HEK293T (cell line): ENCODE measurements at regions of chr10 and their contacts with region 1.

Region 1: GRCh38 chr10:22436884-22437619 is 91.8 kb downstream of the SPAG6 start:
- DNase-seq: peak; percentile 74

Region 2: GRCh38 chr10:22316285-22317120 is 120.5 kb before region 1 on chr10 and contains the start of gene COMMD3:
- CTCF ChIA-PET with region 1: no interaction called
- POLR2A ChIA-PET with region 1: interaction called, 19 read pairs
- DNase-seq: peak; percentile 67

Region 3: GRCh38 chr10:22340362-22341189 is 96.5 kb before region 1 on chr10:
- CTCF ChIA-PET with region 1: no interaction called
- POLR2A ChIA-PET with region 1: interaction called, 16 read pairs
- DNase-seq: peak; percentile 71

Region 4: DNA sequence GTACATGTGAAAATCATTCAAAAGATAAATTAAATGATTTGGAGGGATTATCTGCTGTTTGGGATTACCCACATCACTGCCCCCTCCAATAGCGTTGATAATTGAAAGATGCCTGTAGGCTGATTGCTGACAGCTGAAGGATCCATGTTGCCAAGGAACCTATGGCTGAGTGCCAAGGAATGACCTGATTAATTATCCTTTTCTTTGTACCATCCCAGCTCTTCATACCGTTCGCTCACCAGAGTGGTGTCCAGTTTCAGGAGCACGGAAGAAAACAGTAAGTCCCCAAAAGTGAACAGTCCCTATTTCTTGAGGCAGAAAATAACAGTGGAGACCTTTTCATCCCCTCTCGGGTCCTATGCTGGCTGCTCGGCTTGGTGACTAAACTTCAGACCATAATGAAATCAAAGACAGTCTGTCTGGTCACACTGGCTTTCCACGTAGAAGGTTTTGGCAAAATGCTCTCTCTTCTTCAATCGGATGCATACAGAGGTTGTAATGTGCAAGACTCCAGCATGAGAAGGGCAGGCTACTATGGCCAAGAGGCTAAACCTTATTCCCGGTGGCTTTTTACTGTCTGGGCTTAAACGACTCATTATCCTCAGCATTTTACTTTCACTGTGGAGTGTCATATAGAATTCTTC is 17.0 kb after region 1 on chr10:
- CTCF ChIA-PET with region 1: no interaction called
- POLR2A ChIA-PET with region 1: interaction called, 44 read pairs
- DNase-seq: no peak

Region 5: DNA sequence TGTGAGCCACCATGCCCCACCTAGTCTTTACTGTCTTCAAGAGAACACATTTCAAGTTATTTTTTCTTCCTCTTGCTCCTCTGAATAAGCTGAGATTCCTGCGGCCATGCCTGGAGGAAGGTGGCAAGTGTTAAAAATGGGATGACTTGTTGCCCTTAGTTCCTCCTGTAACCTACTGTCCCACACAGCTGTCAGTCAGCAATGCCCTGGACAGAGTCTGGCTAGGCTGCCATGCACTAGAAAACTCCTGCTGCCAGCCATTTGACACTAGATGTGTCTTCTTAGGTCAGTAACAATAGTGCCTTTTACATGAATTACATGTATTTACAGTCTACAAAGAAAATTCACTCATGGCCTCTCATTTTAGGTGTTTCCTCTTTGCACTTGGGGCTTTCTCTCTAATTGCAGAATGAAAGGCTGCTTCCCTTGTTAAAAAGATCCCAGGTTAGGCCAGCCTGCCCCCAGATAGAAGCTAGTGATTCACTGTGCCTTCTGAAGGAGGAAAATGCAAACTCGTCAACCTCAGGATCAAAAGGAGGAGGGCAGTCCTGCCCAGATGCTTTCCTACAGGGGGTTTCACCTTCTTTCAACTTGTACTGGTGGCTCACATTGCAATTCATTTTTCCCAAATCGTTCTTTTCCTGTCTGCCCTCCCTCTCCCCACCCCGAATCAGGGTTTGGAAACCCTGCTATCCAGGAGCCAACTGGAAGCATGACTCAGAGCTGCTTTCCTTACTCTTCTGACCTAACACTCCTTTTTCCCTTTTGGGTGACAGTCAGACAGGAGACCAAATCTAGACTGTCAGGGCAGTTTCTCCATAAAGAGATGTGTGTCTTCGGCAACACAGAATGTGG is 44.9 kb after region 1 on chr10:
- CTCF ChIA-PET with region 1: no interaction called
- POLR2A ChIA-PET with region 1: interaction called, 15 read pairs
- DNase-seq: no peak

Region 6: DNA sequence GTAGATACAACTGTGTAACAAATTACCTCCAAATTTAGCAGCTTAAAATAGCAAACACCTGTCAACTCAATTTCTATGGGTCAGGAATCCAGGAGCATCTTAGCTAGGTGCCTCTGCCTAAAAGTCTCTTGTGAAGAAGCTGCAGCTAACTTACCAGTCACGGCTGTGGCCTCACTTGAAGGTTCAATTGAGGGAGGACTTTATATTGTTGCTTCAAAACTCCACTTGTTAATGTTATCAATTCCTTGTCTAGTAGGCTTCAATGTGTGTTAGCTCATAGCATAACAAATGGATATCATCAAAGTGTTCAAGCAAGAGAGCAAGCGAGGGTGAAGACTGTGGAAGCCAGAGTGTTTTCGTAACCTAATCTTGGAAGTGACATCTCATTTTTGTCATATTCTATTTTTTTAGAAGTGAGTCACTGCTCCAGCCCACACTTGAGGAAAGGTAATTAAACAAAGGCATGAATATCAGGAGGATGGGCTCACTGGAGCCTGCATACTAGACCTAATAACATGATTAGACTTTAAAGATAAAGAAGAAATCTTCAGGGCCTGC is 81.2 kb after region 1 on chr10:
- CTCF ChIA-PET with region 1: no interaction called
- POLR2A ChIA-PET with region 1: interaction called, 12 read pairs
- DNase-seq: no peak

Region 7: DNA sequence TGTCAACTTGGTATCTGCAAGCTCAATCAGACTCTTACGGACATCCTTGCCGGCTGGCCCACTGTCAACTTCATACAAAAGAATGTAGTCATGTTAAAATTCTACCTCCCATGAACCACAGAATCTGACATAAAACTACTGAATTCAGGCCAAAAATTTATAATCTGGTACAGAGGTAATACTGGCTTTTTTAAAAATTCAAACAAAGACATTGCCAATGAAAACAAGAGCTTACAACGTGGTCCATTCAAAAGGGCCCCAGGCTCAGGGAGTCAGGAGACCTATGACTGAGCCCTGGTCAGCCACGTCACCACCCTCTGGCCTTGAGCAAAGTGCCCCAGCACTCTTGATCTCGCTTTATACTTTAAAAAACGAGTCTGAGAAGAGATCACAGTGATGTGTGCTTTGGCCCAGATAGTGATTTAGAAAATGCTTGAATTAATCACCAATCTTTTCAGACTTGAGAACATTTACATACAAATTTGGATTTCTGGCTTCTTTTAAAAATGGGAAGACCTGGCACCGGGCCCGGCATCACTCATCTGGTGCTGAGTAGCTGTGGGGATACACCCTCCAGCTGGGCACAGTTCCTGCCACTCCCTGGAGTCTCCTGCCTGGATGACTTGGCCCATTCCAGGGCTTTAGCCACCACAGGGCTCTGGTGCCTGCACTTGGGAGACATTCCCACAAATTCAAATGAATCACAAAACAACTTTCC is 183.2 kb after region 1 on chr10:
- CTCF ChIA-PET with region 1: no interaction called
- POLR2A ChIA-PET with region 1: no interaction called
- DNase-seq: no peak